Breast epithelium (tissue), 4 donors: ENCODE measurements at regions of chr11 and their contacts with region 1.

Region 1: DNA sequence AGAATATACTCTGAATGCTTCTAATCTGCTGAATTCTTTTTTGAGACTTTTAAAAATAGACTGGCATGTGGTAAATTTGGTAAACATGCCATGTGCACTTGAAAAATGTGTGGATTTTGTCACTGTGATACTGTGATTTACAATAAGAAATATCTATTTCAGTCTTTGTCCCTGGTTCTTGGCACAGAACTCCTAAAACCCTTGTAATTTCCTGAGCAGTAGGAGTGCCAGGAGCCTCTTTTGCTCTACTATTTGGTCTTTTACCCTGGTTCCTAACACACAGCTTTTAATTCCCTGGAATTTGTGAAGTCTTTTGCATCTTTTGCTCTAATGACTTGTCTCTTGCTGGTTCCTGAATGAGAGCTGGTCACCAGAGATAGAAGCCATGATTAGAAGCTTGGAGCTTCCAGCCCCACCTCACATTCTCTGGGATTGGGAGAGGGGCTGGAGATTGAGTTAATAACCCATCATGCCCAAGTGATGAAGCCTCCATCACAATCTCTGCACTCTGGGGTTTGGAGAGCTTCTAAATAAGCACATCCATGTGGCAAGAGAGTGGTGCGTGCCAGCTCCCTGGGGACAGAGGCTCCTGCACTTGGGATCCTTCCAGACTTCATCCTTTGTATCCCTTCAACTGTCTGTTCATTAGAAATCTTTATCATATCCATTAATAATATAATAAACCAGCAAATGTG is 27.2 kb upstream of the SYT13 start:
- DNase-seq: no peak
- H3K4me3 ChIP-seq: no peak overlapping the region
- H3K27ac ChIP-seq: no peak overlapping the region
- H3K4me1 ChIP-seq: no peaks in the 10 kb centered on the region
- H3K27me3 ChIP-seq: no peaks in the 10 kb centered on the region
- CTCF ChIP-seq: no peak
- POLR2A ChIP-seq: no peak

Region 2: DNA sequence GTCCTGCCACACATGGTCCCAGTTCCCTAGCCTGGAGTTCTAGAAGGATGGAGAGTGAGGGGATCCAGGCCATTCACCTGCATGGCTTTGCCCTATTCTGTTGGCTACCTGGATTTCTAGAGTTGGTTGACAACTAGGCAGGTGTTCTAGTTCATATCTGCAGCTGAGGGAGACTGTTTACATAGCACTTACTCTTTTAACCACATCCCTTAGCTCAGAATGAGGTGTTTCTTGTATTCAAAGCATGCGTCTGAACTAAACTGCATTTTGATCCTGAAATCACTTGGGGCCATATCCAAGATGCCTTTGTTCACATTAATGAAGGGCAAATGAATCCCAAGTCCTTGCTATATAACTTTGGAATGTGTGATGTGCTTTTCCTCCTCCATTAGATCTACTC is 88.0 kb before region 1 on chr11:
- intact Hi-C with region 1: loop called (anchors 5 kb)
- DNase-seq: no peak
- H3K4me3 ChIP-seq: no peak overlapping the region
- H3K27ac ChIP-seq: no peak overlapping the region
- H3K4me1 ChIP-seq: no peaks in the 10 kb centered on the region
- H3K27me3 ChIP-seq: no peaks in the 10 kb centered on the region
- CTCF ChIP-seq: no peak
- POLR2A ChIP-seq: no peak

Region 3: GRCh38 chr11:45267052-45267451 is 46.3 kb before region 1 on chr11:
- intact Hi-C with region 1: no loop called
- DNase-seq: no peak
- H3K4me3 ChIP-seq: no peak overlapping the region
- H3K27ac ChIP-seq: no peak overlapping the region
- H3K4me1 ChIP-seq: no peaks in the 10 kb centered on the region
- H3K27me3 ChIP-seq: no peaks in the 10 kb centered on the region
- CTCF ChIP-seq: no peak
- POLR2A ChIP-seq: no peak

Region 4: GRCh38 chr11:45298718-45299117 is 14.6 kb before region 1 on chr11:
- intact Hi-C with region 1: no loop called
- DNase-seq: no peak
- H3K4me3 ChIP-seq: no peak overlapping the region
- H3K27ac ChIP-seq: no peak overlapping the region
- H3K4me1 ChIP-seq: no peaks in the 10 kb centered on the region
- H3K27me3 ChIP-seq: no peaks in the 10 kb centered on the region
- CTCF ChIP-seq: no peak
- POLR2A ChIP-seq: no peak